Endothelial cell of umbilical vein (primary cell): ENCODE measurements at regions of chr3 and their contacts with region 1.

Region 1: DNA sequence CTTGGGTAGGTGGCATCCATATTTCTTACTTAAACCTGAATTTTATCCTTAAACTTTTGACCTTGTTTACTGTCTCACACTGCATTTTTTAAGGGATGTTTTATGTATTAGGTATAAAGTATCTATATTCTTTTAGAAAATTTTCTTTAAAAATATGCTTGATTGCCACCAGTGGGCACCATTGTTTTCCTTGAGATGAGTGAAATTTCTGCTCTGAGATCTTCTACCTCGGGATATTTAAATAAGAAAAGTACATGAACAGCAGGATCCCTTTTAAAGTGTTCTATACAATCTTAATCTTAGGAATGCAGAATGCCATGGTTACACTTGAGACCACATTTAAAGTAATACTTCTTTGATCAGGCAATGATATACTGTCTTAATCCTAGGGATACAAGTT is 108.7 kb downstream of the SLMAP start:
- DNase-seq: peak; percentile 47
- H3K4me3 ChIP-seq: no peak overlapping the region
- H3K27ac ChIP-seq: no peak overlapping the region
- H3K4me1 ChIP-seq: no peaks in the 10 kb centered on the region
- H3K27me3 ChIP-seq: no peaks in the 10 kb centered on the region
- CTCF ChIP-seq: peak; percentile 16 to 22
- POLR2A ChIP-seq: no peak

Region 2: DNA sequence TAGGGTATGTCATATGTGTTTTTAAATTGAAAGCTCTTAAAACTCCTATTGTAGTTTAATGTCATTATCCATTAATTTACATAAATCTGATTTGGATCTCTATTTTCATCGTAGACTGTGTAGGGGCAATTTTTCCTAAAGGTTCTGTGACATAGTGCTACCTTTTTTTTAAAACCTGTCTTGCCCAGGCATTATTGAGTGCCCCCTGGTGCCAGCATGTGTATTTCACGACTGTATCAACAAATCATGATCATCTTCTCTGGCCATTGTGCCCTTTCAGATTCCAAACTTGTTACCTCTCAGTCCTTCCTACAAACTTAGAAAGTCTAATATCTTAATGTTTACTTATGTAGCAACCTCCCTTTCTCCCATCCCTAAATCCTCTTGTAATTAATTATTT is 46.1 kb after region 1 on chr3:
- CTCF ChIA-PET with region 1: interaction called, 12 read pairs
- POLR2A ChIA-PET with region 1: no interaction called
- dilution Hi-C with region 1: no loop called
- intact Hi-C with region 1: loop called (anchors 5 kb)
- DNase-seq: peak; percentile 43
- H3K4me3 ChIP-seq: no peak overlapping the region
- H3K27ac ChIP-seq: no peak overlapping the region
- H3K4me1 ChIP-seq: peaks cover 12% of the 10 kb centered on the region
- H3K27me3 ChIP-seq: no peaks in the 10 kb centered on the region
- CTCF ChIP-seq: peak; percentile 38 to 45
- POLR2A ChIP-seq: no peak